GM12878 (cell line): ENCODE measurements at regions of chr5 and their contacts with region 1.

Region 1: GRCh38 chr5:78076351-78076750 is 218.1 kb downstream of the AP3B1 start:
- DNase-seq: no peak
- ATAC-seq: peak; percentile 70
- H3K4me3 ChIP-seq: no peak overlapping the region
- H3K27ac ChIP-seq: no peak overlapping the region
- H3K4me1 ChIP-seq: no peaks in the 10 kb centered on the region
- H3K27me3 ChIP-seq: no peaks in the 10 kb centered on the region
- CTCF ChIP-seq: no peak
- EP300 ChIP-seq: no peak
- POLR2A ChIP-seq: no peak
- RAD21 ChIP-seq: no peak

Region 2: DNA sequence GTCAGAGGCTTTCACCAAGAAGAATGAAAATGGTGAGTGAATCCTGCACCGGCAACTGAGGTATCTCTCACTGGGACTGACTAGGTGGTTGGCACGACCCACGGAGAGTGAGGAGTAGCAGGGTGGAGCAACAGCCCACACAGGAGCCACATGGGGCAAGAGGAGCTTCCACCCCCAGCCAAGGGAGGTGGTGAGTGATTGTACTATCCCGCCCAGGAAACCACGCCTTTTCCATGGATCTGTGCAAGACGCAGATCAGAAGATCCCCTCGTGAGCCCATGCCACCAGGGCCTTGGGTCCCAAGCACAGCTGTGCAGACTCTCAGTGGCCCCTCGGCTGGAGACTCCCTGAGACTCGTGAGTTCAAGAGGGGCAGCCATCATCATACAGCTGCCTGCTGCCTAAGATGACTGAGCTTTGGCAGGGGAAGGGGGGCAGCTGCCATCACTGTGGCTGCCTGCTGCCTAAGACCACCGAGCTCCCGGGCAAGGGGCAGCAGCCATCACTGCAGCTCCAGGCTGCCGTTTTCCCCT is 11.3 kb before region 1 on chr5:
- CTCF ChIA-PET with region 1: interaction called, 12 read pairs
- POLR2A ChIA-PET with region 1: no interaction called
- RAD21 ChIA-PET with region 1: no interaction called
- SMC1A ChIA-PET with region 1: interaction called, 9 read pairs
- in situ Hi-C with region 1: no loop called
- intact Hi-C with region 1: no loop called
- DNase-seq: no peak
- ATAC-seq: no peak
- H3K4me3 ChIP-seq: no peak overlapping the region
- H3K27ac ChIP-seq: no peak overlapping the region
- H3K4me1 ChIP-seq: no peaks in the 10 kb centered on the region
- H3K27me3 ChIP-seq: no peaks in the 10 kb centered on the region
- CTCF ChIP-seq: no peak
- EP300 ChIP-seq: no peak
- POLR2A ChIP-seq: no peak
- RAD21 ChIP-seq: no peak

Region 3: DNA sequence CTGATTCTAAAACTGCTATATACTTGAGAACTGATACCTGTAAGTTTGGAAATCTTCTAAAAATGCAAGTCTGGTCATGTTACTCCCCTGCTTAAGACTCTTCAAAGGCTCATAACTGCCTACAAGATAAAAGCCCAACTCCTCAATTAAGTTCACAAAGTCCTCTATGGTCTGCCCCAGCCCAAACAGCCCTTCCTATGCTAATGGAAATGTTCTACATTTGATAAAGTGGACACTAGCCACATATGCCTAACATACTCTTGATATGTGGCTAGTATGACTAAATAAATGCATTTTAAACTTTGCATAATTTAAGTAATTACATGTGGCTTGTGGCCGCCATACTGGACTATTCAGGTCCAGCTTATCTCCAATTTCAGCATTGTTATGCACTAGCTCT is 13.7 kb after region 1 on chr5:
- CTCF ChIA-PET with region 1: interaction called, 11 read pairs
- POLR2A ChIA-PET with region 1: interaction called, 3 read pairs
- RAD21 ChIA-PET with region 1: no interaction called
- SMC1A ChIA-PET with region 1: interaction called, 5 read pairs
- in situ Hi-C with region 1: no loop called
- intact Hi-C with region 1: no loop called
- DNase-seq: no peak
- ATAC-seq: no peak
- H3K4me3 ChIP-seq: no peak overlapping the region
- H3K27ac ChIP-seq: no peak overlapping the region
- H3K4me1 ChIP-seq: no peaks in the 10 kb centered on the region
- H3K27me3 ChIP-seq: no peaks in the 10 kb centered on the region
- CTCF ChIP-seq: no peak
- EP300 ChIP-seq: no peak
- POLR2A ChIP-seq: no peak
- RAD21 ChIP-seq: no peak

Region 4: GRCh38 chr5:78243639-78244038 is 167.3 kb after region 1 on chr5:
- CTCF ChIA-PET with region 1: no interaction called
- POLR2A ChIA-PET with region 1: no interaction called
- RAD21 ChIA-PET with region 1: no interaction called
- SMC1A ChIA-PET with region 1: no interaction called
- in situ Hi-C with region 1: no loop called
- intact Hi-C with region 1: no loop called
- DNase-seq: no peak
- ATAC-seq: no peak
- H3K4me3 ChIP-seq: no peak overlapping the region
- H3K27ac ChIP-seq: no peak overlapping the region
- H3K4me1 ChIP-seq: no peaks in the 10 kb centered on the region
- H3K27me3 ChIP-seq: no peaks in the 10 kb centered on the region
- CTCF ChIP-seq: no peak
- EP300 ChIP-seq: no peak
- POLR2A ChIP-seq: no peak
- RAD21 ChIP-seq: no peak